GM10248 (cell line): ENCODE measurements at regions of chr1 and their contacts with region 1.

Region 1: GRCh38 chr1:182604169-182605164 is at the start of gene RGS16:
- DNase-seq: peak; percentile 97
- CTCF ChIP-seq: no peak

Region 2: GRCh38 chr1:182588500-182589452 is 15.7 kb before region 1 on chr1 and contains the start of gene RNASEL:
- CTCF ChIA-PET with region 1: interaction called, 85 read pairs
- POLR2A ChIA-PET with region 1: interaction called, 5 read pairs
- DNase-seq: peak; percentile 54
- CTCF ChIP-seq: no peak

Region 3: DNA sequence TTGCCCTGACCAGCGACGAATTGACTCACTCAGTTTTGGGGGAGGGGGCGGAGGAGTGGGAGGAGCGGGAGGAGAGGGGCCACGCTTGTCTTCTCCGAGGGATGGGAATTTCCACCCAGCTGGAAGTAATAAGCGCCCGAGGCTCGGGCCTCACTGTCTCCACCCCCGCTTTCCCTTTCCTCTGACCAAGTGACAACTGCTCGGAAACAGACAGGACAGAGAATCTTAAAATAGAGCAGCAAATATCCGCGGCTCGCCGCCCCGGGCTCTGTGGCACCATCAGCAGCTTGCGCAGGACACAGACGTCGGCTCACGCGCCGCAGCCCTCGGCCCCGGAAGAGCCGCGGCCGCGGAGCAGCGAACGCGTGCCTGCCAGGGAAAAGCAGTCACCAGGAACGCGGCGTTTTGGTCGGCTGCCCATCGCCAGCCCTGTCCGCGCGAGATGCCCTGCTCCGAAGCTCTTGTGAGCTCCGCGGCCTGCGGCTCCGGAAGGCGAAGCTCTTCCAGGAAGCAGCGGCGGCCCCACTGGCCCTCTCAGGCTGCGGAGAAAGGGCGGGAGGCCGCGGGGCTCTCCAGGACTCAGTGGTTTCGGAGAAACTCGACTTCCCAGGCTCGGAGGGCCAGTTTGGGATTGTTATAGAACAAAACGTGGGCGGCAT is 10.5 kb after region 1 on chr1:
- CTCF ChIA-PET with region 1: interaction called, 159 read pairs
- POLR2A ChIA-PET with region 1: interaction called, 20 read pairs
- DNase-seq: peak; percentile 69
- CTCF ChIP-seq: no peak

Region 4: DNA sequence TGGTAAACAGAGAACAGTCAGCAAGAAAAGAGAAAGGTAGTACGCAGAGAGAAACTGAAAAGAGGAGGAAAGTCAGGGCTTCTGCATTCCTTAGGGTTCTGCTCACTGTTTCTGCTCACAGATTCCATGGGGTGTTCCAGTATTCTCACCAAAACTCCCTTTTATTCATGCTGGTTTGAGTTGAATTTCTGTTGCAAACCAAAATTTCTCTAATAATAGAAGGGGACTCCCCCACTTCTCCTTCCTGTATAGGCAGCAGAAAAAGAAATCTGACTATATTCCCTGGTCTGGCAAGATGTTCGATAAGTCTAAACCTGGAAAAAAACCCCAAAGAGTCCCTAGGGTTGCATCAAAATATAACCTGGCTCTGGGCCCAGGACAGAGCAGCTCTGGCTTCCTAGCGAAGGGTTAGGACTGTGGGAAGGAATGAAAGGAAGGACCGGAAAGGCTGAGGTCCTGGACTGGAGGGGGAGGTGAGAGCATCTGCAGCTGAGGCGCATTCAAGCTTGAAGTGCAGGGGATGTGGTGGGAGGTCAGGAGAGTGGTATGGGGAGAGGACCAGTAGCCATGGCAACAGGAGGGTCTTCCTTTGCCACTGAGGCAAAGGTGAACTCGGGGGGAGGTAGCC is 18.5 kb after region 1 on chr1:
- CTCF ChIA-PET with region 1: interaction called, 27 read pairs
- POLR2A ChIA-PET with region 1: interaction called, 4 read pairs
- DNase-seq: no peak
- CTCF ChIP-seq: no peak

Region 5: GRCh38 chr1:182629499-182630096 is 25.1 kb after region 1 on chr1:
- CTCF ChIA-PET with region 1: interaction called, 27 read pairs
- POLR2A ChIA-PET with region 1: no interaction called
- DNase-seq: no peak
- CTCF ChIP-seq: no peak

Region 6: GRCh38 chr1:182643706-182644105 is 39.2 kb after region 1 on chr1:
- CTCF ChIA-PET with region 1: interaction called, 12 read pairs
- POLR2A ChIA-PET with region 1: no interaction called
- DNase-seq: no peak
- CTCF ChIP-seq: no peak

Region 7: GRCh38 chr1:182789138-182790076 is 184.9 kb after region 1 on chr1 and contains the start of gene NPL:
- CTCF ChIA-PET with region 1: interaction called, 1,252 read pairs
- POLR2A ChIA-PET with region 1: interaction called, 3 read pairs
- DNase-seq: peak; percentile 89
- CTCF ChIP-seq: no peak